ENCODE measurements at regions of chr10 and their contacts with region 1.

Region 1: GRCh38 chr10:72273410-72274212 is at the start of gene DDIT4:
- DNase-seq: peak; percentile 96
- ATAC-seq: peak; percentile 91
- H3K4me3 ChIP-seq: peak within 1 kb of the TSS; percentile 93 to 94
- H3K27ac ChIP-seq: peak within 1 kb of the TSS; percentile 91
- H3K4me1 ChIP-seq: peaks cover 39 to 69% of the 10 kb centered on the region in 2 experiments
- H3K27me3 ChIP-seq: no peaks in the 10 kb centered on the region
- CTCF ChIP-seq: no peak
- POLR2A ChIP-seq: peak; percentile 99
- RAD21 ChIP-seq: no peak
- total RNA-seq, gene DDIT4: 462 TPM

Region 2: DNA sequence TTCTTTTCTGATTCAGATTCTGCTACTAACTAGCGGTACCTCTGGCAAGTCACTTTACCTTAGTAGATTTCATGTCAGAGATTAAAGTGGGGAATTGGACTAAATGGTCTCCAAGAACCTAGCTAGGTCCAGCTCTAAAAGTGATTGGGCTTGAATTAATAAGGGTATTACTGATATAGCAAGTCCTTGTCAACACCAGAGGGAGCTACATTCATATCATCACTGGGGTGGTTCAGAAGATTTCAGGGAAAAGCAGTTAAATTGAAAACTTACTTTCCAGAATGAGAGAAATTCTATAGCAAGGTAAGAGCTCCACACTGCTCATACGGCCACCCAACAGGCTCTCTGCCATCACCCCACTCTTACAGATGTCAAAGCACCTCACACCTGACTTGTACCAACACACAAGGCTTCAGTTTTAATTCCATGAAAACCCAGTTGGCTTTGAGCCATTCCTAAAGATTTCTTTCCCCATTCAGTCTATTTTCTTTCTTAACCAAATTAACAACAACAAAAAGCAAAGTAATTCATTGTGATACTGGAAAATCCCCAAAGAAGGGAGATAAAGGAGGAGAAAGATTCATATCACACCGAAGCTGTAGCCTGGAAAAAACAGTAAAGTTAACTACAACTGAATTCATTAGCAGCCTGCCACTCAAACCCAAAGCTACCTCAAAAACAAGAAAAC is 147.3 kb before region 1 on chr10:
- CTCF ChIA-PET with region 1: interaction called, 12 read pairs
- POLR2A ChIA-PET with region 1: interaction called, 14 read pairs
- RAD21 ChIA-PET with region 1: interaction called in 1 of 2 experiments, 3 read pairs
- intact Hi-C with region 1: no loop called
- DNase-seq: peak; percentile 40
- ATAC-seq: peak; percentile 78
- H3K4me3 ChIP-seq: no peak overlapping the region
- H3K27ac ChIP-seq: no peak overlapping the region
- H3K4me1 ChIP-seq: no peaks in the 10 kb centered on the region
- H3K27me3 ChIP-seq: no peaks in the 10 kb centered on the region
- CTCF ChIP-seq: peak; percentile 51 to 78 (median 62)
- POLR2A ChIP-seq: no peak
- RAD21 ChIP-seq: peak; percentile 85

Region 3: DNA sequence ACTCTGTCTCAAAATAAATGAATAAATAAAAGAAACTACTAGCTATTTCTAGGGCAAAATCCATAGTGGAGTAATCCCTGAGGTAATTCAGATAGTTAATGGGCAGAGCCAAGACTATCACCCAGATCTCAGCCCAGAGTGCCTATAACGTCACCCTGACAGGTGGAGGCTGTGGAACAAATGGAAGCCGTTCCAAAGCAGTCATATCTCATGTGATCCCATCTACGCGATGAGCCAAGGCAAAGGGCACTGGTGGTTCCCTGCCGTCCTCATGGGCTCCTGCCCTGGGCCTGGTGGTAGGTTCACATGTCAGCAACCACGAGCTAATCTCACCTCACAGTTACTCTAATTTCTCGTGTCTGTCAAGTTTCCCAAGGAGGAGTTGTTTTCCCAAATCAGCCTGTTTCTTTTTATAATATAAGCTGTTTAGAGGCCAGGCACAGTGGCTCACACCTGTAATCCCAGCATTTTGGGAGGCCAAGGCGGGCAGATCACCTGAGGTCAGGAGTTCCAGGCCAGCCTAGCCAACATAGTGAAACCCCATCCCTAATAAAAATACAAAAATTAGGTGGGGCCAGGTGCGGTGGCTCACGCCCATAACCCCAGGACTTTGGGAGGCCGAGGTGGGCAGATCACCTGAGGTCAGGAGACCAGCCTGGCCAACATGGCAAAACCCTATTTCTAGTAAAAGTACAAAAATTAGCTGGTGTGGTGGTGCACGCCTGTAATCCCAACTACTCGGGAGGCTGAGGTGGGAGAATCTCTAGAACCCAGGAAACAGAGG is 35.0 kb before region 1 on chr10:
- CTCF ChIA-PET with region 1: no interaction called
- POLR2A ChIA-PET with region 1: interaction called, 11 read pairs
- RAD21 ChIA-PET with region 1: interaction called in 1 of 2 experiments, 3 read pairs
- intact Hi-C with region 1: no loop called
- DNase-seq: no peak
- ATAC-seq: no peak
- H3K4me3 ChIP-seq: no peak overlapping the region
- H3K27ac ChIP-seq: no peak overlapping the region
- H3K4me1 ChIP-seq: peaks cover 0 to 3% of the 10 kb centered on the region in 2 experiments; a peak in 1 of 4 replicates
- H3K27me3 ChIP-seq: no peaks in the 10 kb centered on the region
- CTCF ChIP-seq: no peak
- POLR2A ChIP-seq: no peak
- RAD21 ChIP-seq: no peak

Region 4: DNA sequence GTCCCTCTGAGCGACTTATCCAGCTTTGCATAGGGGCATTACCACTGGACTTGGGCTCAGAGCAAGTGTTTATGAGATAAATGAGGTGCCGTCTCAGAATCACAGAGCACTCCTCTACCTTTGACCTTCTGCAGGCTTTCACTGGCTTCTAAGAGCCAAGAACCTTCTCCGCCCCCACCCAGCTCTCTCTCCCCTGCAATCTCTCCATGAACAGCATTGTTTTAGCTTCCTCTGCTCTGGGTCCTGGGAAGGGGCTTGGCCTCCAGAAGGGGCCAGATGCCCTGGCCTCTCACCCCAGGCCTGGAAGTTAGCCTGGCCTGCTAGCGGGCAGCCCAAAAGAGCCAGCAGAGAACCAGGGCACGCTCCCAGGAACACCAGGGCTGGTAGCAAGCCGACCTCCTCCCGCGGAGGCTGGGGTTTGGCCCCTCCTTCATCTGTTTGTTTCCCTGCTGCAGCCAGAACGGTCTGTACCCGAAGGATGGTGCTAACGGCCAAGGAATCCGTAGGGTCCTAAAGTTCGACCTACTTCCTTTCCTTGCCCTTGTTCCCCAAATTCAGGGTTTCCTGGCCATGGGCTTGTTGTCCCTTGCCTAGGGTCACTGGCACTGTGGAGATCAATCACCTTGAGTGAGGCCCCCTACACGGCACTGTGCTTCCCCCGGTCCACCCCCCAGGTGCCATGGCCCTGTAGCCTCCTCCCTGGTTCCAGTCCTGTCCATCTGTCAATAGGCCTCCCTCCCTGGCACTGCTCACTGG is 18.6 kb before region 1 on chr10:
- CTCF ChIA-PET with region 1: interaction called, 10 read pairs
- POLR2A ChIA-PET with region 1: interaction called, 166 read pairs
- RAD21 ChIA-PET with region 1: no interaction called
- intact Hi-C with region 1: no loop called
- DNase-seq: no peak
- ATAC-seq: peak; percentile 88
- H3K4me3 ChIP-seq: peak overlapping the region; percentile 9 to 16; a peak in 3 of 4 replicates
- H3K27ac ChIP-seq: peak overlapping the region; percentile 63
- H3K4me1 ChIP-seq: peaks cover 24 to 48% of the 10 kb centered on the region in 2 experiments
- H3K27me3 ChIP-seq: no peaks in the 10 kb centered on the region
- CTCF ChIP-seq: no peak
- POLR2A ChIP-seq: no peak
- RAD21 ChIP-seq: peak; percentile 41

Region 5: DNA sequence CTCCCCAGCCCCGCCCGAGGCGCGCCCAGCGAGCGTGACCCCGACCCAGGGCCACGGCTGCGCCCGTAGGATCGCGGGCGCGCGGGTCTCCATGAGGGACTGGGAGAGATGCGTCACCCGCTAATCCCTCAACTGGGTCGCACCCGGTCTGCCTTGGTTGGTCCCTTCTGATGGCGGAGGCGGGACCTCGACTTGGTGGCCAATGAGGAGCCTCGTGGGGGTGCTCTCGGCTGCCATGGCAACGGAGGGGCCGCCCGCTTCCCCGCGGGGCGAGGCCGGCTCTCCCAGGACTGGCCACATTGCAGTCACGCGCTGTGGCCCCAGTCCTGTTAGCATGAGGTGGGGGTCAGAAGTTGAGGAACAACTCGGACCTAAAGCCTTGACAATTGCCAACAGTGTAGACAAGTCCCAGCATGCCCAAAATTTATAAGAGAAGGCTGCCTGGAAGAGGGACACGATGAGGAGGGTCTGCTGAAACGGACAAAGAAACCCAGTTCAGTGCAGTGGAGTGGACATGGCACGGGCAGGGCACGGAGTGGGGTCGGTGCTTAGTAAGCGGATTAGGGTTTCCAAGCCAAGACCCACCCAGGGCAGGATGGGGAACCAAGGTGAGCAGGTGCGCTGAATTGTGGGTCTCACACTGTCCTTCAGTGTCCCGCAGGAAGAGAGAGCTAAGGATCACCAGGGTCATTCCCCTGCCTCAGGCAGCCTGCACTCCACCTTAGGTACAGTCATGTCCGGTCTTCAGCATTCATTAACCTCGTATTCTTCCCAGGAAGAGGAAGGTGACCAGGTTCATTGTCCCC is 24.6 kb after region 1 on chr10:
- CTCF ChIA-PET with region 1: interaction called, 3 read pairs
- POLR2A ChIA-PET with region 1: interaction called, 371 read pairs
- RAD21 ChIA-PET with region 1: no interaction called
- intact Hi-C with region 1: no loop called
- DNase-seq: peak; percentile 94
- ATAC-seq: peak; percentile 90
- H3K4me3 ChIP-seq: peak overlapping the region; percentile 58 to 64
- H3K27ac ChIP-seq: peak overlapping the region; percentile 98
- H3K4me1 ChIP-seq: peaks cover 25 to 62% of the 10 kb centered on the region in 2 experiments
- H3K27me3 ChIP-seq: no peaks in the 10 kb centered on the region
- CTCF ChIP-seq: no peak
- POLR2A ChIP-seq: no peak
- RAD21 ChIP-seq: no peak

Region 6: DNA sequence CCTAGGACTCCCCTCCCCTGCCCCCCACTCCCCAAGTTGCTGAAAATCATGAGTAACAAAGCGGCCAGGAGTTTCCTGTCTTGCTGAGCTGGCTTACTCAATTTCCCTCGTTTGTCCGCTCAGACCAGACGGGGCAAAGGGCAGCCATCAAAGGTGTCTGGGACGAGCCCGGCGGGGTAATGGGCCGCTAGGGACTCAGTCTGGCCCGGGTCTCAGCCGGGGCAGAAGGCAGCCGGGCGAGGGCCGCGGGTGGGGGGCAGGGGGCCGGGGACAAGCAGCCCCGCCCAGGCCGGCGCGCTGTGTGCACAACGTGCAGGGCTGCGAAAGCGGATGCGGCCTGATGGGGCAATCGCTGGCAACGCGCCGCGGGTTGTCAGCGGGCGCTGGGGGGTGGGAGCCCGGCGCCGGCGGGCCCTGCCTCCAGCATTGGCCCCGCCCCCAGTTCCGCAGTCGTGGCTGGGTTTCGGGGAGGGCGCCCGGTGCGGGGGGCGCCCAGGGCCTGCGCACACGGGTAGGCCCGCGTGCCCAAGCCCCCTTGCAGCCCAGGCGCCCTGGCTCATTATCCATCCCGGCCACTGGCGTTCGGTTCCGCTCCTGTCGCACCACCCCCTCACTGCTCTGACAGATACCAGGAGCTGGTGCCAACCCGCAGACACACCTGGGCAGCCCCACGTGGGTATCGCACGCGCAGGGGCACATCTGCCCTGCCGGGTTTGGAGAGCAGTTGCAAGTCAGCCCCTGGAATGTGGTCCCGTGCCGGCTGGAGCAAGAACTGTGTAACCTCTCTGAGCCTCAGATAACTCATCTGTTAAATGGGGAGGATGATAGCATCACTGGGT is 46.0 kb after region 1 on chr10:
- CTCF ChIA-PET with region 1: interaction called, 3 read pairs
- POLR2A ChIA-PET with region 1: interaction called, 274 read pairs
- RAD21 ChIA-PET with region 1: interaction called, 3 to 4 read pairs
- intact Hi-C with region 1: loop called (anchors 2 kb)
- DNase-seq: peak; percentile 75
- ATAC-seq: peak; percentile 57
- H3K4me3 ChIP-seq: peak overlapping the region; percentile 33 to 52
- H3K27ac ChIP-seq: peak overlapping the region; percentile 89
- H3K4me1 ChIP-seq: peaks cover 78 to 92% of the 10 kb centered on the region in 2 experiments
- H3K27me3 ChIP-seq: no peaks in the 10 kb centered on the region
- CTCF ChIP-seq: no peak
- POLR2A ChIP-seq: no peak
- RAD21 ChIP-seq: no peak

Region 7: DNA sequence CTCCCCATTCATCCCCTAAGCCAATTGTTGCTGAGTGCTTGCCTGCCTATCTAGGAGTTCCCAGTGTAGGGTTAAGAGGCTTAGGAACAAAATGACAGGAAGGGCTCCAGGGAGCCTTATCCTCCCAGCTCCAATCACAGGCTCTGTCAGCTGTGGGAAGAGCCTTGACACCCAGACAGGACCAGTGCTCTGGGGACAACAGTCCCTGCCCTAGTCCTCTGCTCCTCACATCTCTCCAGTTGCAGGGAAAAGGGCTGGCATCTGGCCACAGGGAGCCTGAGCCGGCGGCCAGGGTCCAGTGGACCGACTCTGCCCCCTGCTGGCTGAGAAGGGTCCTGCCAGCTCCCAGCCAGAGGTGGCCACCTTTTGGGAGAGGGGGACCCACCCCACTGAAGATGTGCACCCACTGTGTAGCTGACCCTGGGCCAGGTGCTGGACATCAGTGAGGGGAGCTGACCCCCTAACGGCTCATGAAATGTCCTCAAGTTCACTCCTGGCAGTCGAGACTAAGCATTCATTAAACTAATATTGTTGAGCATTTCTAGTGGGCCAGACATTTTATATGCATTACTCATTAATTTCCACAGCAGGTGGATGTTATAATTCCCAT is 63.5 kb after region 1 on chr10:
- CTCF ChIA-PET with region 1: interaction called, 17 read pairs
- POLR2A ChIA-PET with region 1: interaction called, 274 read pairs
- RAD21 ChIA-PET with region 1: interaction called in 1 of 2 experiments, 3 read pairs
- intact Hi-C with region 1: loop called (anchors 2 kb)
- DNase-seq: no peak
- ATAC-seq: peak; percentile 72
- H3K4me3 ChIP-seq: no peak overlapping the region
- H3K27ac ChIP-seq: peak overlapping the region; percentile 35; the same call in 1 of the 2 replicates
- H3K4me1 ChIP-seq: peaks cover 13 to 24% of the 10 kb centered on the region in 2 experiments
- H3K27me3 ChIP-seq: no peaks in the 10 kb centered on the region
- CTCF ChIP-seq: peak in 2 of 3 experiments; percentile 96 to 98; a peak in 4 of 6 replicates
- POLR2A ChIP-seq: no peak
- RAD21 ChIP-seq: no peak

Region 8: GRCh38 chr10:72445851-72446250 is 172.2 kb after region 1 on chr10:
- CTCF ChIA-PET with region 1: no interaction called
- POLR2A ChIA-PET with region 1: no interaction called
- RAD21 ChIA-PET with region 1: no interaction called
- intact Hi-C with region 1: no loop called
- DNase-seq: no peak
- ATAC-seq: no peak
- H3K4me3 ChIP-seq: no peak overlapping the region
- H3K27ac ChIP-seq: no peak overlapping the region
- H3K4me1 ChIP-seq: no peaks in the 10 kb centered on the region
- H3K27me3 ChIP-seq: no peaks in the 10 kb centered on the region
- CTCF ChIP-seq: no peak
- POLR2A ChIP-seq: no peak
- RAD21 ChIP-seq: no peak